Vagina (tissue), 2 donors: ENCODE measurements at regions of chr2 and their contacts with region 1.

Region 1: GRCh38 chr2:225308681-225309080 is 90.8 kb upstream of the NYAP2 start:
- DNase-seq: no peak
- H3K4me3 ChIP-seq: no peak overlapping the region
- H3K27ac ChIP-seq: no peak overlapping the region
- H3K4me1 ChIP-seq: no peaks in the 10 kb centered on the region
- H3K27me3 ChIP-seq: no peaks in the 10 kb centered on the region
- CTCF ChIP-seq: no peak
- POLR2A ChIP-seq: no peak

Region 2: GRCh38 chr2:225207043-225207442 is 101.6 kb before region 1 on chr2:
- intact Hi-C with region 1: loop called (anchors 2 kb)
- DNase-seq: no peak
- H3K4me3 ChIP-seq: no peak overlapping the region
- H3K27ac ChIP-seq: no peak overlapping the region
- H3K4me1 ChIP-seq: no peaks in the 10 kb centered on the region
- H3K27me3 ChIP-seq: no peaks in the 10 kb centered on the region
- CTCF ChIP-seq: no peak
- POLR2A ChIP-seq: no peak